Body of pancreas (tissue), 4 donors: ENCODE measurements at regions of chr10 and their contacts with region 1.

Region 1: DNA sequence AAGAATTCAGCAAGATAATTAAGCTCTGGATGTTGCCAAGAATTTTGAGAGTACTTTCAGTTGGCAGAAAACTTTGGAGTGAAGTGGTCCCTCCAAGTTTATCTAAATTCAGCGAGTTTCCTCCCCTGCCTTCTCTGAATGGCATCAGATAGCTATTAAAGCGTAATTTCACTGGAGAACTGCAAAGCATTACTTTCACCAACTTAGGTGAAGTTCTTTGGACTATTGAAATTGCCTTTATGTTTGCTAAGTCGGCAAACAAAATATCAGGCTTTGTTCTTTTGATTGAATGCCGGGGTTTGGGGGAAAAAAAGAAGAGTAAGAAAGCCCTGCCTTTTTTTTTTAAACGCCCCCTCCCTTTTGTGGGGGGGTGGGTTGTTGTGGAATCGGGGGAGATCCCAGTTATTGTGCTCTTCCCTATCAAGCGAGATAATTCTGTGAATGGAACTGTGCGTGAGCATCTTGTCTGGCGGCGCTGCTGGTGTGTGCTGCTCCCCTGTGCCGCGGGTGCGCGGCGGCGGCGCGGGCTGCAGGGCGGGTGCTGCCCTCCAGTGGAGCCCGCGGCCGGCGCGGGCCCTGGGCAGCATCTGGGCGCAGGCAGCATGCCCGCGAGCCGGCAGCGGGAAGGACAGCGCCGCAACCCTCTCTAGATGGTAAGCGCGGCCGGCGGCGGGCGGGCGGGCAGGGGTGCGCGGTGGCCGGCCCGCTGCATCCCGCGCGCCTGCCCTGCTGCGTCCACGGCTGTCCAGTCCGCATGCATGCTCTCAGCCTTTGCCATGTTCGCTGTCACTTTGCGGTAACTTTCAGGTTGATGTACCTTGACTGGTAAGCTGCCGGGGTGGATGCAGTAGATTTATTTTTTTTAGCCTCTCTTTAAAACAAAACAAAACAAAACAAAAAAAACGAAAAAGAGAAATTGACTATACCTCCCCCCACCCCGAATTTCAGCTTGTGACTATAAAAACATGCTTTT is 176.5 kb downstream of the TCF7L2 start:
- DNase-seq: peak; percentile 65 to 82 (median 74)
- ATAC-seq: peak; percentile 96
- H3K4me3 ChIP-seq: no peak overlapping the region
- H3K27ac ChIP-seq: peak overlapping the region in 1 of 4 donors; percentile 24
- H3K4me1 ChIP-seq: peaks cover 9% of the 10 kb centered on the region
- H3K27me3 ChIP-seq: no peaks in the 10 kb centered on the region
- CTCF ChIP-seq: peak; percentile 18 to 97 (median 90)
- POLR2A ChIP-seq: no peak

Region 2: GRCh38 chr10:112565434-112566053 is 561.0 kb before region 1 on chr10:
- intact Hi-C with region 1: loop called (anchors 10 kb)
- DNase-seq: peak; percentile 41 to 69 (median 50)
- ATAC-seq: peak; percentile 50
- H3K4me3 ChIP-seq: no peak overlapping the region
- H3K27ac ChIP-seq: no peak overlapping the region
- H3K4me1 ChIP-seq: peaks cover 24% of the 10 kb centered on the region
- H3K27me3 ChIP-seq: no peaks in the 10 kb centered on the region
- CTCF ChIP-seq: peak; percentile 34 to 81 (median 67)
- POLR2A ChIP-seq: no peak